ENCODE measurements at regions of chr2 and their contacts with region 1.

Region 1: DNA sequence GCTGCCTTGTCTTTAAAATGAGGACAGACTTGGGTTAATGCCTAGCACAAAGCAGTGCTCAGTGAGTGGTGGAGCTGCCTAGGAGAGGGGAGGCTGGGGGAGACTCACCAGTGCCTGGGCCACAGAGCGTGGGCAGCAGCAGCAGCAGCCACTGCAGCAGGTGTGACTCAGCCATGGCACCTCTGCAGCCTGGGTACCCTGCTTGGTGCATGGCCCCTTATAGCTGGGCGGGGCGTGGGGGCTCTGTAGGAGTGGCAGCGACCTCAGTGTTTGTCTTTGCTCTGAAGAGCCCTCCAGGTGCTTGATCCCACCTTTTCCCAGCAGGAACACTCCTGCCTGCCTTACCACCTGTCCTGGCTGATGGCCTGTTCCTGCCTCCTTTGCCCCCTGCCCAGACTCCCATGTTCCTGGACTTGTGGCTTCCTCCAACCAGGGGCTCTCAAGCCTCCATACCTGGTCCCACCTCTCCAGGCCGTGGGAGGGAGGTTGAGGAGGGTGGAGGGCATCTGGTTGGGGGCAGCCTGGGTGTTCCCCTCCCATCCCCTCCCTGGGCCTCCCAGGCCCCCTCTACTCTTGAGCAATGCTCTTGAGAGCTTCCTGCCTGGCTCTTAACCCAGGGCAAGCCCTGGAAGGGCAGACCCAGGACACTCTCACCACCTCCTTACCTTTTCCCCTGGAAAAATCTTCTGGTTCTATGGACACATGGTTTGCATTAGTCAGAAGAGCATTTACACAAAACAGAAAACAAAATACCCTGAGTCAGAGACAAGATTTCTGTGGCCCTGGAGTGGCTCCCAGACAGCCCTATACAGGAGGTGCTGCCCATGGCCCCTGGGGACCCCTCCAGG is at the start of gene SFTPB:
- DNase-seq: no peak
- H3K4me3 Mint-ChIP-seq: no peak within 1 kb of the TSS
- H3K27ac Mint-ChIP-seq: no peak within 1 kb of the TSS
- H3K4me1 Mint-ChIP-seq: peaks cover 8% of the 10 kb centered on the region
- H3K27me3 Mint-ChIP-seq: peaks cover 40% of the 10 kb centered on the region
- CTCF ChIP-seq: no peak
- total RNA-seq, gene SFTPB: not detected in 2 replicates

Region 2: DNA sequence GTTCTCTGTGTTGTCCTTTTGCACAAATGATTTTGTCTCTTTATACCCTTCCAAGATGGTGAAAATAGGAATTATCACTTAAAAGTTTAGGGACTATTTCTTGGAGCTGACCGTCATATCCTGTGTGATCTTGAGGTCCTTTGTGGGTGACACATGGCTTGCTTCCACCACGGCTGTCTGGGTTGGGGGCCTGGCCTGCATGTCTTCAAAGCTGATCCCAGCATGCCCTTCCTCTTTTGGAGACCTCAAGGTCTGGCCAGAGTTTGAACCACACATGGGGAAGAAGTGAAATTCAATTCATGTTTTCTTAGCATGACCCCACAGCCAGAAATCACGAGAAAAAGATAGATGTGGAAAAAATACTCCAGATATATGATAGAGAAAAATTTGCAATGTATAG is 14.2 kb before region 1 on chr2:
- CTCF ChIA-PET with region 1: no interaction called
- intact Hi-C with region 1: loop called (anchors 1 kb)
- DNase-seq: no peak
- H3K4me3 Mint-ChIP-seq: no peak overlapping the region
- H3K27ac Mint-ChIP-seq: no peak overlapping the region
- H3K4me1 Mint-ChIP-seq: peaks cover 11% of the 10 kb centered on the region
- H3K27me3 Mint-ChIP-seq: no peaks in the 10 kb centered on the region
- CTCF ChIP-seq: no peak